ENCODE measurements at regions of chr12 and their contacts with region 1.

Region 1: GRCh38 chr12:51814311-51815088 is 34.0 kb downstream of the FIGNL2 start:
- DNase-seq: peak; percentile 95
- H3K4me3 ChIP-seq: peak overlapping the region; percentile 33 to 72 (median 46)
- H3K27ac ChIP-seq: peak overlapping the region; percentile 63 to 89 (median 83)
- H3K4me1 ChIP-seq: peaks cover 5 to 41% (median 23%) of the 10 kb centered on the region in 6 donors
- H3K27me3 ChIP-seq: peaks cover 0 to 41% (median 0%) of the 10 kb centered on the region in 7 donors
- CTCF ChIP-seq: peak in 8 of 11 experiments; percentile 5 to 80 (median 72)
- POLR2A ChIP-seq: no peak

Region 2: DNA sequence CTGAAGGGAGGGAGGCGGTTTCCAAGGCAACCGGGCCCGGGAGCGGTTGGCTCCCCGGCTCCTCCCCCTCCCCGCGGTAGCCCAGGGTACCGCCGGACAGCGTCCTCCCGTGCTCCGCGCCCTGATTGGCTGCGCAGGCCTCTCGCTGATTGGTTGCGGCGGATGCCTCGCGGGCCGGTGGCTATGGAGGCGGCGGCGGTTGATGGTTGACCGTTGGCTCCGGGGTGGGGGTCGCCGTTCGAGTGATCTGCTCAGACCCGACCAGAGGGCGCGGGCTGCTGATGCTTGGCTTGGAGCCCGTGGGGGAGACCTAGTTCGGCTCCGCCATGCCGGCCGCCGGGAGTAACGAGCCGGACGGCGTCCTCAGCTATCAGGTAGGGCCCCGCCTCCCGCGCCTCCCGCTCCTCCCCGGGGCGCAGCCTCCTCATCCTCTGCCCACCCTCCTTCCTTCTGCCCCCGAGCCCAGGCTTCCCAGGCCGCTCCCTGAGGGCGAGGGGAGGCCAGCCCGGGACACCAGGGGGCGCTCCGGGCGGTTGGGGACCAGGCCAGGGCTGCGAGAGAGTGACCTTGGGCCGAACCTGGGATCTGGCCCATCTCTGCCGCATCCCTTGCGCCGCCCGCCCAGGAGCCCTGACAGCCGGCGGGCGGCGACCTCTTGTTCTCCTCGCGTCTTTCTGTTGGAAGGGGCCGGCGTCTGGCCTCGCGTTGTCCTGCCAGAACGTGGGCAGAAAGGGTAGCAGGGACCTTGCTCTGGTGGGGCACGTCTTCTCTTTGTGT is 389.6 kb before region 1 on chr12 and contains the start of gene SLC4A8:
- intact Hi-C with region 1: loop called (anchors 5 kb)
- DNase-seq: peak; percentile 95
- H3K4me3 ChIP-seq: peak within 1 kb of the TSS; percentile 60 to 83 (median 74)
- H3K27ac ChIP-seq: peak within 1 kb of the TSS in 2 of 8 donors; percentile 8 to 25
- H3K4me1 ChIP-seq: peaks cover 4 to 19% (median 14%) of the 10 kb centered on the region in 6 donors
- H3K27me3 ChIP-seq: peaks cover 0 to 31% (median 15%) of the 10 kb centered on the region in 7 donors
- CTCF ChIP-seq: peak in 10 of 11 experiments; percentile 49 to 83 (median 71)
- POLR2A ChIP-seq: no peak
- total RNA-seq, gene SLC4A8: 4.3 to 9.7 (median 5.7) TPM

Region 3: DNA sequence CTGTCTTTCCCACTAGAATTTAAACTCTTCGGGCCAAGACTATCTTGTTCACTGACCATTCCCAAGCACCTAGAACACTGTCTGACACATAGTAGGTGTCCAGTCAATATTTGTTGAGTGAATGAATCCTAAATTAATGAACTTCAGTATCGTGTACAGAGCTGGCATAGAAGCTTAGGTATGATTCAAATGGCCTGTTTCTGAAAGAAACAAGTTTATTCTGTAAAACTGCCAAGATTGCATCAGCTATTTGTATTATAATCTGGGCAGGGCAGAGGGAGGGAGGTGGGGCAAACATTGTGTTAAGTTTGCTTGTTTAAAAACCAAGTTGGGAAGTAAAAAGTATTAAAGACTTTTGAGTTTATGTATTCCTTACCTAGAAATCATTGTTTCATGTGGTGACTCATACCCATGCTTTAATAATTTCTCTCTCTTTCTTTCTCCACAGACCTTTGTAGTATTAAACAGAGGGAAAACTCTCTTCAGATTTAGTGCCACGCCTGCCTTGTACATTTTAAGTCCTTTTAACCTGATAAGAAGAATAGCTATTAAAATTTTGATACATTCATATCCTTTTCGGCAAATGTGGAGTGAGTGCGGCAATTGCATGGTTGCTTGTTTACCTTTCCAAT is 130.7 kb before region 1 on chr12:
- intact Hi-C with region 1: no loop called
- DNase-seq: no peak
- H3K4me3 ChIP-seq: no peak overlapping the region
- H3K27ac ChIP-seq: no peak overlapping the region
- H3K4me1 ChIP-seq: peaks cover 0 to 14% (median 0%) of the 10 kb centered on the region in 6 donors
- H3K27me3 ChIP-seq: no peaks in the 10 kb centered on the region
- CTCF ChIP-seq: no peak
- POLR2A ChIP-seq: no peak